ENCODE measurements at regions of chr6 and their contacts with region 1.

Region 1: DNA sequence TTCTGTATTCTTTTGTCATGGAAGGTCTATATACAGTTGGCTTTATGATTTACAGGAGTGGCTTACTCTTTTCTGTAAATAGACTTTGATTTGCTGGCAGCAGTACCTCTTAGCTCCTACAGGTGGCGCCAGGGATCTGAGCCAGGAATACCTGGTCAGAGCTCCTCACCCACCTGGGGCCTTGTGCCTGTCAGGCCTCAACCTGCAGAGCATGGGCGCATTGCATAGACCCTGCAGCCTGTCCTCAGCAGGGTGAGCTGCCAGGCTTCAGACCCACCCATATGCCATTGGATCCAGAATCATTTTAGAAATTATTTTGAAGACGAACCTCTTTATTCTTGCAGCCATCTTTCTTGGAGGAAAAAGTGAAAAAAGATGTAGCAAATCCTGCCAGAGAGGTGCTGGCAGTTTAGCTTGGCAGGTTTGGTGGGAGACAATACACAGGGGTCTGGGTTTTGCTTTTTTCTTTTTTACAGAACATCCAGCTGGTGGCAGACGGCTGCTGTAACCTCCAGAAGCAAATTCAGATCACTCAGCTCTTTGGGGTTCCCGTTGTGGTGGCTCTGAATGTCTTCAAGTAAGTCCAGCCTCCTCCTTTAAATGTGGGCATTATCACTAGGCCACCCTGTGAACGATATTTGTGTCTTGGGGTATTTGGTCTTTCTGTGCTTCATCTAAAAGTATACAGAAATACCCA is 149.1 kb downstream of the MTHFD1L start:
- DNase-seq: peak; percentile 46
- H3K4me3 ChIP-seq: no peak overlapping the region
- CTCF ChIP-seq: peak; percentile 99

Region 2: GRCh38 chr6:150866147-150866990 is 148.2 kb before region 1 on chr6:
- in situ Hi-C with region 1: no loop called
- DNase-seq: peak; percentile 75
- H3K4me3 ChIP-seq: peak overlapping the region; percentile 78
- CTCF ChIP-seq: no peak

Region 3: GRCh38 chr6:150891888-150892485 is 122.6 kb before region 1 on chr6:
- in situ Hi-C with region 1: loop called (anchors 25 kb)
- DNase-seq: peak; percentile 77
- H3K4me3 ChIP-seq: no peak overlapping the region
- CTCF ChIP-seq: peak; percentile 84

Region 4: DNA sequence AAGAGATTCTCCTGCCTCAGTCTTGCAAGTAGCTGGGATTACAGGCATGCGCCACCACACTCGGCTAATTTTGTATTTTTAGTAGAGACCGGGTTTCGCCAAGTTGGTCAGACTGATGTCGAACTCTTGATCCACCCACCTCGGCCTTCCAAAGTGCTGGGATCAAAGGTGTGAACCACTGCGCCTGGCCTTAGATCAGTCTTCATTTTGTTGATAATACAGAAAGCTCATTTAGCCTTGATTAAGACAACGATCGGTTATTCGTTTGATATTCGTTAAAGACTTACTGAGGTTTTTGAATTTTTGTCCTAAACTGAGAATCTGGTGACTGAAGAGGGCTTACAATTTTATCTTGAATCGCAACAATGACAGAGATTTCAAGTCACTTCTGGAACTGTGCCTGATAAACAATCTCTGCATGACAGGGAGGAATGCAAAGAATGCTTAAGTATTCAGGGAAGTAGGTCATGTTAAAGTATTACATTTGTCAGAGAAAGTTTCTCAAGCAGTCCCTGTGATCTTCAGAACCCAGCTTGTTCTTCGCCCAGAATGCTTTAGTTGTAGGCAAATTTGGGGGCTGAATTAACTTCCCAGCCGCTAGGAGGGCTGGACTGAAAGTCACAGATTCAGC is 240.0 kb after region 1 on chr6:
- in situ Hi-C with region 1: no loop called
- DNase-seq: no peak
- H3K4me3 ChIP-seq: no peak overlapping the region
- CTCF ChIP-seq: no peak